ENCODE measurements at regions of chr2 and their contacts with region 1.

Region 1: DNA sequence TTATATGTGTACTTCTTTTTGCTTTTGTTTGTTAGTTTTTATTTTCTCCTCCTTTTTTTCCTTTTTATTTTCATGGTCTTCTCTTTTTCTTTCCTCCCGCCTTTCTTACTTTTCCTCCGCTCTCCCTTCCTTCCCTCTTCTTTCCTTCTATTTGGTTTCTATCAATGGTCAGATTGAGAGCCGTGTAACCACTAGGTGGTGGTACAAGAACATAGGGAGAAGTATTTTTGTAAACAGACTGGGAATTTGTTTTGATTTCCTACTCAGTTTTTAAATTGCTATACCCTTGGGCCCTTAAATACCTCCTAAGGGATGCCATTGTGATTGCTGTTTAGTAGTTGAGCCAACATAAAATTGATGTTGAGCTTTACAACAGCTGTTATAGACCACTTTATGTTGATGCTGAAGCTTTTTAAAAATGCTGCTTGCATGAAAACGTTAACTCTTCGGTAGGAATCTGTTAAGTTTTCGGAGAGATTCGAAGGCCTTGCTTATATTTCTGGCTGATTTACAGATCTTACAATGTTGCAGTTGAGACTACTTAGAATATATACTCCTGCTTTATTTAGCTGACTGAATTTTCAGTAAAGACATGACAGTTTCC is 124.2 kb downstream of the UBE2E3 start:
- DNase-seq: no peak
- ATAC-seq: no peak
- H3K4me3 ChIP-seq: no peak overlapping the region
- H3K27ac ChIP-seq: peak overlapping the region in 1 of 10 donors; percentile 19
- H3K4me1 ChIP-seq: peaks cover 0 to 19% (median 0%) of the 10 kb centered on the region in 9 donors
- H3K27me3 ChIP-seq: peaks cover 0 to 3% (median 0%) of the 10 kb centered on the region in 7 donors
- CTCF ChIP-seq: peak; percentile 27 to 74 (median 68)

Region 2: DNA sequence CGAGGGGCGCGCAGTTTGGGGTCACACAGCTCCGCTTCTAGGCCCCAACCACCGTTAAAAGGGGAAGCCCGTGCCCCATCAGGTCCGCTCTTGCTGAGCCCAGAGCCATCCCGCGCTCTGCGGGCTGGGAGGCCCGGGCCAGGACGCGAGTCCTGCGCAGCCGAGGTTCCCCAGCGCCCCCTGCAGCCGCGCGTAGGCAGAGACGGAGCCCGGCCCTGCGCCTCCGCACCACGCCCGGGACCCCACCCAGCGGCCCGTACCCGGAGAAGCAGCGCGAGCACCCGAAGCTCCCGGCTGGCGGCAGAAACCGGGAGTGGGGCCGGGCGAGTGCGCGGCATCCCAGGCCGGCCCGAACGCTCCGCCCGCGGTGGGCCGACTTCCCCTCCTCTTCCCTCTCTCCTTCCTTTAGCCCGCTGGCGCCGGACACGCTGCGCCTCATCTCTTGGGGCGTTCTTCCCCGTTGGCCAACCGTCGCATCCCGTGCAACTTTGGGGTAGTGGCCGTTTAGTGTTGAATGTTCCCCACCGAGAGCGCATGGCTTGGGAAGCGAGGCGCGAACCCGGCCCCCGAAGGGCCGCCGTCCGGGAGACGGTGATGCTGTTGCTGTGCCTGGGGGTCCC is 352.6 kb after region 1 on chr2 and contains the start of gene ITGA4:
- intact Hi-C with region 1: loop called in 8 of 10 experiments (anchors 1 to 10 kb)
- DNase-seq: peak; percentile 44 to 80
- ATAC-seq: peak; percentile 92 to 97 (median 94)
- H3K4me3 ChIP-seq: peak within 1 kb of the TSS; percentile 26 to 73 (median 58)
- H3K27ac ChIP-seq: peak within 1 kb of the TSS in 8 of 10 donors; percentile 13 to 92 (median 46)
- H3K4me1 ChIP-seq: peaks cover 0 to 40% (median 15%) of the 10 kb centered on the region in 9 donors
- H3K27me3 ChIP-seq: peaks cover 0 to 43% (median 30%) of the 10 kb centered on the region in 7 donors
- CTCF ChIP-seq: peak; percentile 16 to 79 (median 59)
- total RNA-seq, gene ITGA4: 0.72 to 9.2 (median 1.6) TPM

Region 3: DNA sequence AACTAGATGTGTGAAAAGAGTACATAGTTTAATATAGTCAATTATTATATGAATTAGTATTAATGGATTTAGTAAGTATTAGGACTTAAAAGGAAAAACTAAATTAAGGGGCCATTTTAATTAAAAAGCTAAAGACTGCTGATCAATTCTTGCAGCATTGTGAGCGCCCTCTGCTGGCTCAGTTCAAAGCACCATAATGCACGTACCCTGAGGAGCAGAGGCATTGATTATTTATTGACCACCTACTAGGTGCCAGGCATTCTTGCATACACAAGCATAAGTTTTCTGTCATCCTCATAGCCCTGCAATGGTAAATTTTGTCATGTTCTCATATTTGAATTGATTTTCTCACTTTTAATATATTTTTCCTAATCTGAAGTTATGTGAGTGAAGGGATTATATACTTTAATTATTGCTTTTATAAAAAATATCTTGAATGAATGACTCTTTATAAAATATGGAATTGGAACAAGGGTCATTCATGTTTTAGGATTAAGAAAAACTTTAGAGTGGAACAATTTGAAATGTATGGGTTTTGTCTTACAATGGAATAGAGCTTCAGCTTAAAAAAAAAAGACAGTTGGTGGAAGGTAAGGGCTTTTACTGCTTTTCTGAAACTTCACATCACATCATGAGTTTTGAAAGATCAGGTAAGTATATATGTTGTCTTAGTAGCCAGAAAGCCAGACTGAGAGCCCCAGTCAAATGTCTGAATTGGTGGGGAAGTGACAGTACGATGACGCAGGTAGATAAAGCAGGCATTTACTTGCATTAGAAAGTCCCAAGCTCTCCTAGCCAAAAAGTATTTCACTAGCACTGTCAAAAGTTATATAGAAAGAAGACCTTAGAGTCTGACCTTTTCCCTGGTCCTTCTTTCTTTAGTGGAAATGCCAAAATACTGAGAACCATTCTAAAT is 362.3 kb after region 1 on chr2:
- intact Hi-C with region 1: loop called in 7 of 10 experiments (anchors 5 to 10 kb)
- DNase-seq: peak; percentile 43 to 66
- ATAC-seq: no peak
- H3K4me3 ChIP-seq: no peak overlapping the region
- H3K27ac ChIP-seq: no peak overlapping the region
- H3K4me1 ChIP-seq: peaks cover 0 to 67% (median 0%) of the 10 kb centered on the region in 9 donors
- H3K27me3 ChIP-seq: no peaks in the 10 kb centered on the region
- CTCF ChIP-seq: peak; percentile 37 to 88 (median 77)

Region 4: GRCh38 chr2:181715033-181715630 is 610.5 kb after region 1 on chr2:
- intact Hi-C with region 1: loop called (anchors 2 to 10 kb)
- DNase-seq: peak in 1 of 2 donors; percentile 65
- ATAC-seq: peak in 4 of 8 donors; percentile 59 to 68 (median 66)
- H3K4me3 ChIP-seq: no peak overlapping the region
- H3K27ac ChIP-seq: no peak overlapping the region
- H3K4me1 ChIP-seq: no peaks in the 10 kb centered on the region
- H3K27me3 ChIP-seq: peaks cover 0 to 9% (median 0%) of the 10 kb centered on the region in 7 donors
- CTCF ChIP-seq: peak; percentile 26 to 76 (median 70)

Measured in heart right ventricle (tissue), 16 donors.